ENCODE measurements at regions of chr6 and their contacts with region 1.

Region 1: GRCh38 chr6:166097915-166098522 is 69.6 kb downstream of the TBXT start:
- DNase-seq: peak; percentile 51 to 85 (median 69)
- ATAC-seq: peak; percentile 69 to 96 (median 88)
- H3K4me3 ChIP-seq: peak overlapping the region in 11 of 12 donors; percentile 5 to 54 (median 39)
- H3K27ac ChIP-seq: peak overlapping the region in 2 of 12 donors; percentile 13 to 32
- H3K4me1 ChIP-seq: peaks cover 0 to 6% (median 0%) of the 10 kb centered on the region in 12 donors
- H3K27me3 ChIP-seq: peaks cover 0 to 20% (median 6%) of the 10 kb centered on the region in 9 donors
- CTCF ChIP-seq: peak; percentile 78 to 90 (median 86)
- POLR2A ChIP-seq: no peak

Region 2: GRCh38 chr6:165884813-165885765 is 212.9 kb before region 1 on chr6:
- intact Hi-C with region 1: loop called in 8 of 10 experiments (anchors 1 to 2 kb)
- DNase-seq: peak; percentile 74 to 86 (median 77)
- ATAC-seq: peak; percentile 74 to 96 (median 89)
- H3K4me3 ChIP-seq: no peak overlapping the region
- H3K27ac ChIP-seq: no peak overlapping the region
- H3K4me1 ChIP-seq: no peaks in the 10 kb centered on the region
- H3K27me3 ChIP-seq: peaks cover 0 to 2% (median 0%) of the 10 kb centered on the region in 9 donors
- CTCF ChIP-seq: peak; percentile 73 to 95 (median 88)
- POLR2A ChIP-seq: no peak

Region 3: GRCh38 chr6:165987483-165988301 is 110.3 kb before region 1 on chr6:
- intact Hi-C with region 1: loop called in 1 of 10 experiments (anchors 10 kb)
- DNase-seq: peak; percentile 83 to 96 (median 88)
- ATAC-seq: peak; percentile 92 to 96 (median 94)
- H3K4me3 ChIP-seq: peak overlapping the region; percentile 32 to 70 (median 59)
- H3K27ac ChIP-seq: peak overlapping the region in 5 of 12 donors; percentile 62 to 80 (median 68)
- H3K4me1 ChIP-seq: peaks cover 0 to 31% (median 10%) of the 10 kb centered on the region in 12 donors
- H3K27me3 ChIP-seq: peaks cover 0 to 41% (median 9%) of the 10 kb centered on the region in 9 donors
- CTCF ChIP-seq: no peak
- POLR2A ChIP-seq: no peak

Region 4: DNA sequence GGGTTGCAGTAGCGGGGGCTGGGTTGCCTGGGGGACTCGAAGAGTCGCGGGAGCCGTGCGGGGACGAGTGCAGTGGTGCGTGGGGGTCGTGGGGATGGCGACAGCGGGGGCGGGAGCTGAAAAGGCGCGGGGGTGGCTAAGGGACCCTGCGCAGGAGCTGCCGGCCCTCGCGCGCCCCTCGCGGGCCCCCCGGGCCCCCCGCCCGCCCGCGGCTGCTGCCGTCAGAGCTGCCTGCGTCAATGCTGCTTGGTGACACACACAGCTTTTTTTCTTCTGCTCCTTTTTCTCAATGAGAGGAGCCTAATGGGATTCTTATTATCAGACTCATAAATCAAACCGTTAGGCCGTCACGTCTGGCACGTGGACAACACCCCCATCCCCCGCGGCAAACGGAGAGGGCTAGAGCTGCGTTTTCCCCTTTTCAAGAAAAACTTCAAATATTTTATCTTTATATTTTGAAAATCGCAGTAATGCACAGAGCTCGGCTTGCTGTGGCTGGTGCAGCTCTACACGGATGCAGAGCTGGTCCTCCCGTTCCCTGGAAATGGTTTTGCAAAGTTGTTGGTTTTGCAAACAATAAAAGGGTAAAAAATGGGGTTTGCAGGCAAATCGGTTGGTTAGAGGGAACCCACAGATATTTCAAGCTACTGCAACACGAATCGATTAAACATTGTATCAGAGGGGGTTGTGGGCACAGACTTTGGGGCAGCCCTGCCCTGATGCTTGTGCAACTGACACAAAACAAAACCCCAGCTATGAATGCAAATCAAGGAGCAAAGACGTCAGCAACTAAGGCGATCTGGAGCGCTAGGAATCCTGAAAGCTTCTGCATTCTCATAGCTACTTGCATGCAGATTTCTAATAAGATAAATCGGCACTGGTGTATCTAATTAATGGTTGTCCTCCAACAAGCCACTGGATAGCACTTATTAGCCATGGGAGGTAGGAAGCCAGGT is 91.8 kb before region 1 on chr6:
- intact Hi-C with region 1: loop called in 2 of 10 experiments (anchors 5 kb)
- DNase-seq: peak; percentile 64 to 80 (median 75)
- ATAC-seq: peak; percentile 46 to 89 (median 72)
- H3K4me3 ChIP-seq: peak overlapping the region in 11 of 12 donors; percentile 25 to 52 (median 41)
- H3K27ac ChIP-seq: peak overlapping the region; percentile 50 to 93 (median 72)
- H3K4me1 ChIP-seq: peaks cover 0 to 38% (median 21%) of the 10 kb centered on the region in 12 donors
- H3K27me3 ChIP-seq: peaks cover 12 to 66% (median 52%) of the 10 kb centered on the region in 9 donors
- CTCF ChIP-seq: no peak
- POLR2A ChIP-seq: no peak

Region 5: DNA sequence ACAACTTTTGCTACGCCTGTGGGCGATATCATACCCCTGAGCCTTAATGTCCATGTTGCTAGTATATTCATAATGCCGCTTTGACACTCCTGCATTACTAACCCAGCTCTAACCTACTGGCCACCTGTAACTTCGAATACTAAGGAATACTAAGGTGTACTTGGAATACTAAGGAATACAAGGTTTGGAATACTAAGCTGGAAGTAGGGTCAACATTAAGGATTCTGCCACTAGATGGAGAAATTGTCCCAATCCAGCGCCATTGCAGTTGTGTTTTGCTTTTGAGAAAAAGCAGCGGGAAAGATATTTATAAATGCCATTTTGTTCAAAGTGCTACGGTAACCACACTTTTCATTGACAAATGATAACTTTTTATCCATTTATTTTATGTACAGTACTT is 58.9 kb after region 1 on chr6:
- intact Hi-C with region 1: no loop called
- DNase-seq: no peak
- ATAC-seq: no peak
- H3K4me3 ChIP-seq: no peak overlapping the region
- H3K27ac ChIP-seq: no peak overlapping the region
- H3K4me1 ChIP-seq: no peaks in the 10 kb centered on the region
- H3K27me3 ChIP-seq: peaks cover 0 to 45% (median 0%) of the 10 kb centered on the region in 9 donors
- CTCF ChIP-seq: peak in 8 of 12 donors; percentile 13 to 52 (median 40)
- POLR2A ChIP-seq: no peak

Measured in heart left ventricle (tissue), 16 donors.